Heart left ventricle (tissue), 16 donors: ENCODE measurements at regions of chr15 and their contacts with region 1.

Region 1: GRCh38 chr15:95843241-95843910 is 487.1 kb upstream of the NR2F2 start:
- DNase-seq: peak in 4 of 5 donors; percentile 33 to 62 (median 48)
- ATAC-seq: peak; percentile 68 to 81 (median 75)
- H3K4me3 ChIP-seq: no peak overlapping the region
- H3K27ac ChIP-seq: peak overlapping the region in 9 of 12 donors; percentile 9 to 69 (median 48)
- H3K4me1 ChIP-seq: peaks cover 0 to 21% (median 2%) of the 10 kb centered on the region in 12 donors
- H3K27me3 ChIP-seq: no peaks in the 10 kb centered on the region
- CTCF ChIP-seq: no peak
- POLR2A ChIP-seq: no peak

Region 2: GRCh38 chr15:95470997-95471689 is 372.2 kb before region 1 on chr15:
- intact Hi-C with region 1: loop called in 1 of 10 experiments (anchors 10 kb)
- DNase-seq: peak in 4 of 5 donors; percentile 33 to 41 (median 38)
- ATAC-seq: peak in 2 of 4 donors; percentile 62 to 64
- H3K4me3 ChIP-seq: no peak overlapping the region
- H3K27ac ChIP-seq: peak overlapping the region in 11 of 12 donors; percentile 6 to 72 (median 48)
- H3K4me1 ChIP-seq: peaks cover 0 to 36% (median 11%) of the 10 kb centered on the region in 12 donors
- H3K27me3 ChIP-seq: no peaks in the 10 kb centered on the region
- CTCF ChIP-seq: no peak
- POLR2A ChIP-seq: no peak

Region 3: DNA sequence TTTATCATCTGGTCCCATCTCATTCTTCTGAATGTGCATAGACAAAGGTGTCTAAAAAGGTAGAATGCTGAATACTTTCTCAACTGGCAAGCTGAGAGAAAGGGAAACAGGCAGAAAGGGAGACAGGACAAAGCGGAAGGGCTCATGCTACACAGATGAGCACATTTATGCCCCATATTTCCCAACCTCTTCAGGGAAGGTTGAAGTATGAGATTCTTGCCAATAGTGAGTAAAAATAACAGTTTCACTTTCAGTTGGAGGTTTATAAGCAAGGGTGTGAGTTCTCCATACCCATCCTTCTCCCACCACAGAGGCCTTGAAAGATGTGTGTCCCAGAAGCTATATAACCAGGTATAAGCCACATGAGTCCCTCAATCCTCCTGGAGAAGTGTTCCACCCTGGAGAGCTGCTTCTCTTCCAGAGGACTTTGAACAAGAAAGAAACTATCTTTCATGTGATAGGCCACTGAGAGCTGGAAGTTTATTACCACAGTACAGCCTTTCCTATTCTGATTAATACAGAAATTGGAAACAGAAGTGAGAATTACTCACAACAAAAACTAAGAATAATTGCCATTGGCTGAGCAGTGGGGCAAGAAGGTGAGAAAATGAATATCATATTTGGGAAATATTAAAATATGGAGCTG is 222.3 kb before region 1 on chr15:
- intact Hi-C with region 1: loop called in 1 of 10 experiments (anchors 10 kb)
- DNase-seq: no peak
- ATAC-seq: no peak
- H3K4me3 ChIP-seq: no peak overlapping the region
- H3K27ac ChIP-seq: peak overlapping the region in 2 of 12 donors; percentile 7 to 37
- H3K4me1 ChIP-seq: peaks cover 0 to 18% (median 0%) of the 10 kb centered on the region in 12 donors
- H3K27me3 ChIP-seq: no peaks in the 10 kb centered on the region
- CTCF ChIP-seq: no peak
- POLR2A ChIP-seq: no peak

Region 4: GRCh38 chr15:95669146-95669939 is 174.0 kb before region 1 on chr15:
- intact Hi-C with region 1: loop called in 1 of 10 experiments (anchors 10 kb)
- DNase-seq: peak in 1 of 5 donors; percentile 8
- ATAC-seq: peak in 1 of 4 donors; percentile 39
- H3K4me3 ChIP-seq: peak overlapping the region in 8 of 12 donors; percentile 13 to 45 (median 30)
- H3K27ac ChIP-seq: peak overlapping the region in 11 of 12 donors; percentile 9 to 79 (median 52)
- H3K4me1 ChIP-seq: peaks cover 0 to 7% (median 0%) of the 10 kb centered on the region in 12 donors
- H3K27me3 ChIP-seq: no peaks in the 10 kb centered on the region
- CTCF ChIP-seq: no peak
- POLR2A ChIP-seq: no peak

Region 5: GRCh38 chr15:95684693-95685115 is 158.7 kb before region 1 on chr15:
- intact Hi-C with region 1: no loop called
- DNase-seq: no peak
- ATAC-seq: peak in 2 of 4 donors; percentile 26 to 33
- H3K4me3 ChIP-seq: no peak overlapping the region
- H3K27ac ChIP-seq: no peak overlapping the region
- H3K4me1 ChIP-seq: peaks cover 0 to 7% (median 0%) of the 10 kb centered on the region in 12 donors
- H3K27me3 ChIP-seq: no peaks in the 10 kb centered on the region
- CTCF ChIP-seq: no peak
- POLR2A ChIP-seq: no peak

Region 6: GRCh38 chr15:96321639-96322535 is 478.5 kb after region 1 on chr15:
- intact Hi-C with region 1: loop called in 3 of 10 experiments (anchors 2 to 10 kb)
- DNase-seq: peak in 4 of 5 donors; percentile 33 to 73 (median 37)
- ATAC-seq: peak in 3 of 4 donors; percentile 27 to 54 (median 41)
- H3K4me3 ChIP-seq: peak overlapping the region; percentile 18 to 91 (median 53)
- H3K27ac ChIP-seq: peak overlapping the region; percentile 66 to 90 (median 82)
- H3K4me1 ChIP-seq: peaks cover 0 to 23% (median 5%) of the 10 kb centered on the region in 12 donors
- H3K27me3 ChIP-seq: peaks cover 7 to 88% (median 69%) of the 10 kb centered on the region in 9 donors
- CTCF ChIP-seq: peak in 4 of 12 donors; percentile 4 to 24 (median 14)
- POLR2A ChIP-seq: no peak